ENCODE measurements at regions of chr1 and their contacts with region 1.

Region 1: GRCh38 chr1:27668808-27669723 is 2.9 kb downstream of the IFI6 start:
- DNase-seq: peak; percentile 67
- H3K27ac ChIP-seq: no peak overlapping the region
- CTCF ChIP-seq: peak; percentile 92

Region 2: DNA sequence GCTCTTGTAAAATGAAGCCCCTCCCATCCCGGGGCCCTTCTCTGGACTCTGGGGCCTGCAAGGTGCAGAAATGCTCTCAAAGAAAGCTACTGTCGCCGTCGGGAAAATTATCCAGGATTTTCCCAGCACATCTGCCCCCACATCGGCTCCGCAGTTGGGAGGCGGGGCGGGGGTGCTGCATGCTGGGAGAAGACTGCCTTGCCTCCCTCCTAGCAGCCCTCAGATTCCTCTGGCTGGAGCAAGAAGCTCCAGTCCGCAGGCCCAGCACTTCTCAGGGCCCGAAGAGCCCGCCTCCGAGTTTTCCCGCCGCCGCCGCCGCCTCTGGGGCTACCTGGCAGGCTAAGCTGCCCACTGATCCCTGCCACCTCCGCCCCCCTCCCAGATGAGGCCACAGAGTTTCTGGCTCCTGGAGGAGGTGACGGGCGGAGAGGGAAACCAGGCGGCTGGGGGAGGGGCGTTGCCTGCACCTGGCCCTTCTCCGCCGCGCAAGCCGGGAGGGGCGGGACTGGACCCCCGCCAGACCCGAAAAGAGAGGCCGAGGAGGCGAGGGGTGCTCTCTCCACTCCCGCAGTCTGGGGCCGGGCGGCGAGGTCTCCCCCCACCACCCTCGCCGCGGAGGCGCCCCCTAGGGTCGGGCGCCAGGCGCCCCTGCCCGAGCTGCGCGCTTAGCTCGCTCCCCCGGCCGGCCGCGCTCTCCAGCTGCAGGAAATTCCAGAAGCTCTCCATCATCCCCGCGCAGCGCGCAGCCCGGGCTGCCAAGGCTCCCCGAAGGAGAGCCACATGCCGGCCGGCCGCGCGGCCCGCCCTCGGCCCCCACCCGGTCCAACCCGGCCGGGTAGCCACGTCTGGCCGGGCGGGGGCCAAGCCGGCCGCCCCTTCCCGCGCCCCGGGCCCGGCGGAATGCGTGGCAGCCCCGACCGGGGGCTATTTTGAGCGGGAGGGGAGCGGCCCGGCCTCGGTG is 93.9 kb before region 1 on chr1:
- CTCF ChIA-PET with region 1: no interaction called
- POLR2A ChIA-PET with region 1: no interaction called
- DNase-seq: peak; percentile 78
- H3K27ac ChIP-seq: peak overlapping the region; percentile 98
- CTCF ChIP-seq: peak; percentile 30; the same call in 1 of the 2 replicates

Region 3: GRCh38 chr1:27600498-27601175 is 68.4 kb before region 1 on chr1:
- CTCF ChIA-PET with region 1: no interaction called
- POLR2A ChIA-PET with region 1: no interaction called
- DNase-seq: no peak
- H3K27ac ChIP-seq: peak overlapping the region; percentile 93
- CTCF ChIP-seq: no peak

Region 4: DNA sequence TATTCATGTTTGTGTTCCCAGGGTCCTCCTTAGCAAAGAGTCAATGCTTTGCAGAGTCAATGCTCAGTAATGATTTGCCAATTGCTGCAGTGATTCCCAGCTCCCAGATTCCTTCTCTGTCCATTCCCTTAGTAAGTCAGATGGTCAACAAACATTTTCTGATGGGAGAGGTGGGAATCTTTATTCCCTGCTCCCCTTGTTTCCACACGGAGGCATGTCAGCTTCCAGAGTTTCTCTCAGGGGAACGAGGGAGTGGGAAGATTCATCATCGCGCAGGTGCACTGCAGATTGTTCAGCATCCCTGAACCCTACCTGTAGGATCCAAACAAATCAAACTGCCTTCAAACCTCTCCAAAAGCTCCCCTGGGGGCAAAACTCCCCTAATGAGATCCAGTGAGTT is 57.6 kb before region 1 on chr1:
- CTCF ChIA-PET with region 1: interaction called, 10 read pairs
- POLR2A ChIA-PET with region 1: no interaction called
- DNase-seq: no peak
- H3K27ac ChIP-seq: no peak overlapping the region
- CTCF ChIP-seq: no peak

Region 5: DNA sequence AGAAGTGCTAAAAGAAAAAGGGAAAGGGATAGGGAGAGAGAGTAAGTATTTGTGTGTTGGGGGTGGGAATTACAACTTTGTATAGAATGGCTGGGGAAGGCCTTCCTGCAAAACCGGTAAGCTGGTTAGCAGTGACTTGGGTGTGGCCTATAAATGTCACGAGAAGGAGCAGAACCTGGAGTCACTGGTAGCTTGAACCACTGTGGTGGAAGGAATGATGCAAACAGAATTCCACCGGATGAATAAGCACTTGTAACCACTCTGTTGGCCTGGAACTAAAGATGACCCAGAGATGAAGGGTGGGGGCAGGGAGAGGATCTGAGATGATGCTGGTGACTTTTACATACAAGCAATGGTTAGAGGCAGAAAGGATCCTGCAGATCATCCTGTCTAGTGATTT is 299.6 kb after region 1 on chr1:
- CTCF ChIA-PET with region 1: no interaction called
- POLR2A ChIA-PET with region 1: no interaction called
- DNase-seq: peak; percentile 40
- H3K27ac ChIP-seq: no peak overlapping the region
- CTCF ChIP-seq: no peak